Naive thymus-derived CD4-positive, alpha-beta T cell (primary cell): ENCODE measurements at regions of chr9 and their contacts with region 1.

Region 1: GRCh38 chr9:109574068-109574882 is 76.2 kb upstream of the PTPN3 start:
- DNase-seq: peak in 4 of 9 donors; percentile 2 to 16 (median 4)
- ATAC-seq: no peak
- H3K4me3 ChIP-seq: no peak overlapping the region
- H3K4me3 Mint-ChIP-seq: no peak overlapping the region
- H3K27ac ChIP-seq: no peak overlapping the region
- H3K27ac Mint-ChIP-seq: no peak overlapping the region
- H3K4me1 ChIP-seq: no peaks in the 10 kb centered on the region
- H3K4me1 Mint-ChIP-seq: no peaks in the 10 kb centered on the region
- H3K27me3 ChIP-seq: no peaks in the 10 kb centered on the region
- H3K27me3 Mint-ChIP-seq: peaks cover under 1 to 30% (median 15%) of the 10 kb centered on the region in 5 donors

Region 2: GRCh38 chr9:109817846-109818472 is 243.7 kb after region 1 on chr9:
- CTCF ChIA-PET with region 1: no interaction called
- POLR2A ChIA-PET with region 1: no interaction called
- intact Hi-C with region 1: loop called in 1 of 2 experiments (anchors 1 kb)
- DNase-seq: peak in 4 of 9 donors; percentile 1 to 31 (median 10)
- ATAC-seq: no peak
- H3K4me3 ChIP-seq: no peak overlapping the region
- H3K4me3 Mint-ChIP-seq: no peak overlapping the region
- H3K27ac ChIP-seq: no peak overlapping the region
- H3K27ac Mint-ChIP-seq: no peak overlapping the region
- H3K4me1 ChIP-seq: no peaks in the 10 kb centered on the region
- H3K4me1 Mint-ChIP-seq: peaks cover 0 to under 1% (median 0%) of the 10 kb centered on the region in 7 donors
- H3K27me3 ChIP-seq: no peaks in the 10 kb centered on the region
- H3K27me3 Mint-ChIP-seq: peaks cover 5 to 16% (median 7%) of the 10 kb centered on the region in 5 donors

Region 3: GRCh38 chr9:109903515-109904138 is 329.4 kb after region 1 on chr9:
- CTCF ChIA-PET with region 1: no interaction called
- POLR2A ChIA-PET with region 1: no interaction called
- intact Hi-C with region 1: loop called in 1 of 2 experiments (anchors 5 kb)
- DNase-seq: peak; percentile 11 to 73 (median 53)
- ATAC-seq: peak; percentile 84
- H3K4me3 ChIP-seq: no peak overlapping the region
- H3K4me3 Mint-ChIP-seq: no peak overlapping the region
- H3K27ac ChIP-seq: no peak overlapping the region
- H3K27ac Mint-ChIP-seq: no peak overlapping the region
- H3K4me1 ChIP-seq: no peaks in the 10 kb centered on the region
- H3K4me1 Mint-ChIP-seq: peaks cover 0 to 37% (median 5%) of the 10 kb centered on the region in 7 donors
- H3K27me3 ChIP-seq: no peaks in the 10 kb centered on the region
- H3K27me3 Mint-ChIP-seq: no peaks in the 10 kb centered on the region

Region 4: DNA sequence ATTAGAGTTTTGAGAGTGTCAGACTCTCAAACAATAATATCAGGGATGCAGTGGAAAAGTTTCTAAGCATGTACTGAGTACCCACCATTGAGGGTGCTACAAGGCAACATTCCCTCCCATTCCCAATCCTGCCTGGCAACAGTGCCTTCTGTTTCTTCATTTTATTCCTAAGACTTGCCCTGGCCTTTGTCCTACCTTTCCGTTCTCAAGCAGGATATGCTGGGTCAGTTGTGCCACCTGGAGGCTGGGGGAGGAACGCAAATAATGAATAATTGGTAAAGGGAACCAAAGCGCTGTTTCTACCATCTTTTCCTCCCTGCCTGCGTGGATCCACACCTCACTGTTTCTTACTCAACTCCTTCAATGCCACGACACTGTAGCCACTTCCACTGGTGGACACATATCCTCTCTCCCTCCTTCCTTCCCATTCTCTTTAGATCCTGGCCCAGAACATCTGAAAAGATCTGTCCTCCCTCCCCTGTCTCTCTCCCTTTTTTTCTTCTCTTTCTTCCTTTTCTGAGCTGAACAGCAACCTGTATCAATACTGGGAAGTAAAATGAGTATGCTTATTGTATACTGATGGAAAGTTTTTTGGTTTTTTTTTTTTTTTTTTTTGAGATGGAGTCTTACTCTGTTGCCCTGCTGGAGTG is 484.2 kb after region 1 on chr9:
- CTCF ChIA-PET with region 1: interaction called, 3 read pairs
- POLR2A ChIA-PET with region 1: no interaction called
- intact Hi-C with region 1: loop called in 1 of 2 experiments (anchors 2 kb)
- DNase-seq: peak; percentile 16 to 63 (median 47)
- ATAC-seq: peak; percentile 68
- H3K4me3 ChIP-seq: no peak overlapping the region
- H3K4me3 Mint-ChIP-seq: peak overlapping the region in 2 of 10 donors; percentile 9 to 18
- H3K27ac ChIP-seq: no peak overlapping the region
- H3K27ac Mint-ChIP-seq: peak overlapping the region in 1 of 9 donors; percentile 66
- H3K4me1 ChIP-seq: no peaks in the 10 kb centered on the region
- H3K4me1 Mint-ChIP-seq: peaks cover 0 to 54% (median 8%) of the 10 kb centered on the region in 7 donors
- H3K27me3 ChIP-seq: no peaks in the 10 kb centered on the region
- H3K27me3 Mint-ChIP-seq: peaks cover 0 to 4% (median 0%) of the 10 kb centered on the region in 5 donors

Region 5: DNA sequence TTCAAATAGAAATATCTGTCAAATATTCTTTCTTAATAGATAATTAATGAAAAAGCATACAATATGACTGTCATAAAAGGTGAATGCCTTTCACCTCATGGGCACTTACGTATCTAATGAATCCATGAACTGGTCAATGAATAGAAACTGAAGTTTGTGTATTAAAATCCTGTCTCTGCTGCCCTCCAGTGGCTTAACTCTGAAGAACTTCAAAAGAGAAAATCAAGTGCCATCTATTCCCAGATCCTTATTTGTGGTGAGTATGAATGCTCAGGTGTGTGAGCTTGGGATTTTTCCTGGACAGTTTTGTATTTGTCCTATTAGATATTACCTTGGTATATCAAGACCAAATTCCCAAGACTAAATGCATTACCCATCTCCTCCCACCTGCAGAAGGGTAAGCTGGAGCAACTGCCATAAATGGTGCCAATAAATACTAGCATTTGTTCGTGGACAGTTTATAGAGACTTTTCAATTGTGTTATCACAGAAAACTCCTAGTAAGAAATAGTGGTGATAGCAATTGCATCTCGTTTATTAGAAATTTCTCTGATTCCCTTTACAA is 1049.3 kb after region 1 on chr9:
- CTCF ChIA-PET with region 1: no interaction called
- POLR2A ChIA-PET with region 1: no interaction called
- intact Hi-C with region 1: loop called in 1 of 2 experiments (anchors 5 kb)
- DNase-seq: peak in 3 of 9 donors; percentile 3 to 16 (median 5)
- ATAC-seq: no peak
- H3K4me3 ChIP-seq: no peak overlapping the region
- H3K4me3 Mint-ChIP-seq: peak overlapping the region in 1 of 10 donors; percentile 42
- H3K27ac ChIP-seq: no peak overlapping the region
- H3K27ac Mint-ChIP-seq: no peak overlapping the region
- H3K4me1 ChIP-seq: no peaks in the 10 kb centered on the region
- H3K4me1 Mint-ChIP-seq: no peaks in the 10 kb centered on the region
- H3K27me3 ChIP-seq: no peaks in the 10 kb centered on the region
- H3K27me3 Mint-ChIP-seq: no peaks in the 10 kb centered on the region